ENCODE measurements at regions of chr6 and their contacts with region 1.

Region 1: GRCh38 chr6:99151634-99152344 is 197.7 kb downstream of the FAXC start:
- DNase-seq: peak; percentile 77
- H3K4me3 Mint-ChIP-seq: no peak overlapping the region
- H3K27ac Mint-ChIP-seq: no peak overlapping the region
- H3K4me1 Mint-ChIP-seq: no peaks in the 10 kb centered on the region
- H3K27me3 Mint-ChIP-seq: peaks cover 3% of the 10 kb centered on the region

Region 2: GRCh38 chr6:99047447-99047846 is 104.3 kb before region 1 on chr6:
- intact Hi-C with region 1: no loop called
- DNase-seq: no peak
- H3K4me3 Mint-ChIP-seq: no peak overlapping the region
- H3K27ac Mint-ChIP-seq: no peak overlapping the region
- H3K4me1 Mint-ChIP-seq: no peaks in the 10 kb centered on the region
- H3K27me3 Mint-ChIP-seq: peaks cover 4% of the 10 kb centered on the region

Region 3: GRCh38 chr6:99241905-99242534 is 90.2 kb after region 1 on chr6:
- intact Hi-C with region 1: loop called (anchors 1 kb)
- DNase-seq: no peak
- H3K4me3 Mint-ChIP-seq: no peak overlapping the region
- H3K27ac Mint-ChIP-seq: no peak overlapping the region
- H3K4me1 Mint-ChIP-seq: no peaks in the 10 kb centered on the region
- H3K27me3 Mint-ChIP-seq: peaks cover 4% of the 10 kb centered on the region